ENCODE measurements at regions of chr10 and their contacts with region 1.

Region 1: GRCh38 chr10:87094373-87095235 is at the starts of genes GLUD1 and SHLD2:
- DNase-seq: peak; percentile 94 to 95
- H3K4me3 ChIP-seq: peak within 1 kb of the TSS; percentile 60 to 78 (median 65)
- H3K27ac ChIP-seq: peak within 1 kb of the TSS; percentile 96 to 98 (median 98)
- H3K4me1 ChIP-seq: peaks cover 31 to 34% of the 10 kb centered on the region in 2 donors
- H3K27me3 ChIP-seq: no peaks in the 10 kb centered on the region
- CTCF ChIP-seq: peak in 1 of 6 experiments; percentile 9
- POLR2A ChIP-seq: peak; percentile 63 to 89
- total RNA-seq, gene GLUD1: 154 to 199 (median 157) TPM
- total RNA-seq, gene SHLD2: 60.8 to 71.9 (median 63.6) TPM

Region 2: GRCh38 chr10:86922553-86922961 is 172.0 kb before region 1 on chr10:
- intact Hi-C with region 1: no loop called
- DNase-seq: no peak
- H3K4me3 ChIP-seq: no peak overlapping the region
- H3K27ac ChIP-seq: no peak overlapping the region
- H3K4me1 ChIP-seq: no peaks in the 10 kb centered on the region
- H3K27me3 ChIP-seq: no peaks in the 10 kb centered on the region
- CTCF ChIP-seq: no peak
- POLR2A ChIP-seq: no peak

Region 3: GRCh38 chr10:86960003-86960862 is 134.4 kb before region 1 on chr10:
- intact Hi-C with region 1: loop called (anchors 10 kb)
- DNase-seq: peak in 1 of 2 donors; percentile 27
- H3K4me3 ChIP-seq: no peak overlapping the region
- H3K27ac ChIP-seq: peak overlapping the region; percentile 0 to 85 (median 61)
- H3K4me1 ChIP-seq: peaks cover 0 to 38% of the 10 kb centered on the region in 2 donors
- H3K27me3 ChIP-seq: no peaks in the 10 kb centered on the region
- CTCF ChIP-seq: peak; percentile 29 to 66 (median 62)
- POLR2A ChIP-seq: no peak

Measured in thyroid gland (tissue), 4 donors.